ENCODE measurements at regions of chr15 and their contacts with region 1.

Region 1: GRCh38 chr15:40506964-40507571 is 36.3 kb downstream of the CHST14 start:
- DNase-seq: peak; percentile 78 to 92 (median 92)
- ATAC-seq: peak; percentile 89 to 93
- H3K4me3 ChIP-seq: peak overlapping the region; percentile 6
- H3K27ac ChIP-seq: no peak overlapping the region
- H3K4me1 ChIP-seq: no peaks in the 10 kb centered on the region
- H3K27me3 ChIP-seq: no peaks in the 10 kb centered on the region

Region 2: GRCh38 chr15:39594056-39594763 is 912.9 kb before region 1 on chr15:
- intact Hi-C with region 1: no loop called
- DNase-seq: no peak
- ATAC-seq: no peak
- H3K4me3 ChIP-seq: no peak overlapping the region
- H3K27ac ChIP-seq: no peak overlapping the region
- H3K4me1 ChIP-seq: no peaks in the 10 kb centered on the region
- H3K27me3 ChIP-seq: no peaks in the 10 kb centered on the region

Region 3: GRCh38 chr15:40440743-40441564 is 66.1 kb before region 1 on chr15 and contains the start of gene BAHD1:
- intact Hi-C with region 1: loop called in 1 of 4 experiments (anchors 10 kb)
- DNase-seq: peak; percentile 98 to 99 (median 99)
- ATAC-seq: peak; percentile 94
- H3K4me3 ChIP-seq: peak within 1 kb of the TSS; percentile 98
- H3K27ac ChIP-seq: peak within 1 kb of the TSS; percentile 53
- H3K4me1 ChIP-seq: peaks cover 10% of the 10 kb centered on the region
- H3K27me3 ChIP-seq: no peaks in the 10 kb centered on the region
- total RNA-seq, gene BAHD1: 15.4 to 17.8 (median 16.9) TPM

Region 4: DNA sequence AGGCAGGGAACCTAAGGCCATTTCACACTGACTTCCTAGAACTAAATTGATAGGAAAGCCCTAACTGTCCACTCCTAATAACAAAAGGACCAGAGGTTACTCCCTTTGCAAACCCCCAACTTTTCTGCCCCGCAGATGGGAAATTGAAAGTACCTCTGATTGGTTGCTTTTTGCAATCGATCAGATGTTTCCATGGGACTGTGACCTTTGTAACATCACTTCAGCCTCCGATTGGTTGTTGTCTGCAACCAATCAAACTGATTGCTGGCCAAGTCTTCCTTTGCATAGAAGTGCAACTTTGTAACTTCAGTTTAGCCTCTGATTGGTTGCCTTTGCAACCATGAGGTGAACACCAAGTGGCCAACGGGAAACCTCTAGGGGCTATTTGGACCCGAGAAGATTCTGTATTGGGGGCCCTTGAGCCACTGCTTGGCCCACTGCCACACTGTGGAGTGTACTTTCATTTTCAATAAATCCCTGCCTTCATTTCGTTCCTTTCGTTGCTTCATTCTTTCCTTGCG is 75.7 kb after region 1 on chr15:
- intact Hi-C with region 1: no loop called
- DNase-seq: no peak
- ATAC-seq: peak; percentile 18 to 31
- H3K4me3 ChIP-seq: peak overlapping the region; percentile 45
- H3K27ac ChIP-seq: no peak overlapping the region
- H3K4me1 ChIP-seq: no peaks in the 10 kb centered on the region
- H3K27me3 ChIP-seq: no peaks in the 10 kb centered on the region

Region 5: GRCh38 chr15:40593588-40594428 is 86.7 kb after region 1 on chr15 and contains the start of gene KNL1:
- intact Hi-C with region 1: loop called in 1 of 4 experiments (anchors 10 kb)
- DNase-seq: peak; percentile 84 to 93 (median 93)
- ATAC-seq: peak; percentile 95 to 96
- H3K4me3 ChIP-seq: peak within 1 kb of the TSS; percentile 93
- H3K27ac ChIP-seq: peak within 1 kb of the TSS; percentile 97
- H3K4me1 ChIP-seq: no peaks in the 10 kb centered on the region
- H3K27me3 ChIP-seq: no peaks in the 10 kb centered on the region
- total RNA-seq, gene KNL1: 0.39 to 1.6 (median 0.50) TPM

Region 6: DNA sequence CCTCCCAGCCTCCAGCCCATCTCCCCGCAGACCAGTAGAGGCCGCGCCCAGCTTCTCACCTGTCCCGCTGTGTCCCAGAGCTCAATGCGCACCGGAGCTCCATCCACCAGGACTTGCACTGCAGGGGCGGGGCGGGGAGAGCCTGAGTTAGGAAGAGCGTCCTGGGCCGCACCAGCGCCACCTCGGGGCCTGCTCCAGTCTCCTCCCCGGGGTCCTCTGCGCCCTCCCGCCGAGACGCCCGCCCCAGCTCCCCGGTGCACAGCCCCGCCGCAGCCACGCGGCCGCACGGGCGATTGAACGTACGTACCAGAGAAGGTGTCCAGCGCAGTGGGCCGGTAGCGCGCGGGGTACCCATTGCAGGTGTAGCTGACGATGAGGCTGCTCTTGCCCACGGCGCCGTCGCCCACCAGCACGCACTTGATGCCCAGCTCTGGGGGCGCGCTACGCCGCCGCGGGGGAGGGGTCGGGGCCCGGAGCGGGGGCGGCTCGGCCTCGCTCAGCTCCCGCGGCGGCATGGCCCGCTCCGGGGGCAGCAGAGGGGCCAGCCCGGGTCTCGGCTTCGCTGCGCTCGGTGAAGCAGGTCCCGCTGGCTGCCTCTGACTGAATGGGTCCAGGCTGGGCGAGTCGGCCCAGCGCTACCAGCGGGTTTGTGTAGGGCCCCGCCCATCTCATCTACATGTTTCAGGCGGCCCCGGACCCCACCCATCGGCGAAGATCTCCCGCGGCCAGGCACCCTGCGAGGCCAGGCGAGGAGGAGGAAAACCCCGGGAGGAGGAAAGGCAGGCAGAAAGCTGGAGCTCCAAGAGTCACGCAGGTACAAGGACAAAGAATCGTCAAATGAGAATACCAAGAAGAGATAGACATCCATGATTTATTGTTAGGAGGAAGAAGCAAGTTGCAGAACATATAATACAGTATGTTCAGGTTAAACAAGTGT is 366.8 kb after region 1 on chr15 and contains the start of gene RHOV:
- intact Hi-C with region 1: no loop called
- DNase-seq: peak; percentile 54 to 82 (median 79)
- ATAC-seq: peak; percentile 84 to 85
- H3K4me3 ChIP-seq: peak within 1 kb of the TSS; percentile 81
- H3K27ac ChIP-seq: no peak within 1 kb of the TSS
- H3K4me1 ChIP-seq: no peaks in the 10 kb centered on the region
- H3K27me3 ChIP-seq: no peaks in the 10 kb centered on the region
- total RNA-seq, gene RHOV: not detected